Heart left ventricle (tissue), 16 donors: ENCODE measurements at regions of chr1 and their contacts with region 1.

Region 1: DNA sequence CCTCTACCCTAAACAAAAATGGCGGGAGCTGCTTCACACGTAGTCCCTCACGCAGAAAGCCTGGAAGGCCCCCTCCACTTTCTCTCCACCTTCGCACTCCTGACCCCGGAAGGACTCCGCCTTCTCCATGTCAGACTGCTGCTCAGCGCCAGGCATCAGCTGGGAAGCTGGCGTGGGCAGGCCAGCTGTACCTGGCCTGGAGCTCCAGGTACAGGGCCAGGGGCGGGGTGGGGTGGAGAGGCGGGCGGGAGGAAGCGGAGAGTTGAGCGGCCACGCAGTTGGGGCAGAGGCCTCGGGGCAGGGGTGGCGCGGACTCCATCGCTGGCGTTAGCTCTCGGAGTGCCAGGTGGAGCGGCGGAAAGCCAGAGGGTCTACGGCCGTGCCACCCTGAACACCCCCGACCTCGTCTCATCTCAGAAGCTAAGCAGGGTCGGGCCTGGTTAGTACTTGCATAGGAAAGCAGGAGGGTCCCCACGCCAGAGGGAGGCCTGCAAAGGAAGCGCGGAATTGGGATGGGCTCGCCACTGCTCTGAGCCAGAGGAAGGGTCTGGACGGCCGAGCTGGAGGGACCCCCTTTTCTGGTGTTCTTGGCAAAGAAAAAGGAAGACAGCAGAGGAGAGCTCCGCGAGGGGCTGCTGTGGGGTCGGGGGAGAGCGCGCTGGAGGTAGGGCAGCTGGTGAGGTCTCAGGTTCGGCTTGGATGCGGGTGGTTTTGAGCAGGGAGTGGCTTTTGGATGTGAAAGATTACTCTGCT is at the start of gene MIGA1:
- DNase-seq: peak; percentile 89 to 94 (median 92)
- ATAC-seq: peak; percentile 97 to 99 (median 99)
- H3K4me3 ChIP-seq: peak within 1 kb of the TSS; percentile 74 to 97 (median 85)
- H3K27ac ChIP-seq: peak within 1 kb of the TSS in 10 of 12 donors; percentile 47 to 79 (median 67)
- H3K4me1 ChIP-seq: peaks cover 0 to 21% (median 12%) of the 10 kb centered on the region in 12 donors
- H3K27me3 ChIP-seq: no peaks in the 10 kb centered on the region
- CTCF ChIP-seq: no peak
- POLR2A ChIP-seq: no peak
- total RNA-seq, gene MIGA1: 8.1 to 14.1 (median 10.3) TPM

Region 2: DNA sequence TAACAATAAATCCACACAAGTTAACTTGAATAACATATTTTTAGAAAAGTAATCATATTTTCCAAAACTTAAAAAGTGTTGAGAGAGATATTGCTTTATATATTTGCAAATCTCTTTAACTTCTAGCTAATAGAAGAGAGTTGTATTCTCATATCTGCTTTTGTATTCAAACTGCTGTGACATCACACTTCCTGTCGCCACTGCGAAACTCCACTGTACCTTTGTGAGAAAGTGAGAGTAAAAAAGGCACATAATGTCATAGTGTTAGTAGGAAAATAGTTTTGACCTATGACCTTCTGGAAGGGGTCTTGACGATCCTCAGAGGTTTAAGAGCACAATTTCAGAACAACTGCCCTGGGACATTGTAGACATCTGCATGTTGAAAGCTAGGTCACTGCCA is 476.3 kb before region 1 on chr1:
- intact Hi-C with region 1: no loop called
- DNase-seq: no peak
- ATAC-seq: no peak
- H3K4me3 ChIP-seq: no peak overlapping the region
- H3K27ac ChIP-seq: no peak overlapping the region
- H3K4me1 ChIP-seq: no peaks in the 10 kb centered on the region
- H3K27me3 ChIP-seq: peaks cover 0 to 4% (median 0%) of the 10 kb centered on the region in 9 donors
- CTCF ChIP-seq: no peak
- POLR2A ChIP-seq: no peak

Region 3: GRCh38 chr1:77759071-77760028 is 20.4 kb before region 1 on chr1 and contains the start of gene USP33:
- intact Hi-C with region 1: loop called in 2 of 10 experiments (anchors 1 to 2 kb)
- DNase-seq: peak; percentile 90 to 95 (median 91)
- ATAC-seq: peak; percentile 91 to 99 (median 98)
- H3K4me3 ChIP-seq: peak within 1 kb of the TSS; percentile 80 to 100 (median 94)
- H3K27ac ChIP-seq: peak within 1 kb of the TSS; percentile 70 to 95 (median 92)
- H3K4me1 ChIP-seq: peaks cover 3 to 46% (median 26%) of the 10 kb centered on the region in 12 donors
- H3K27me3 ChIP-seq: no peaks in the 10 kb centered on the region
- CTCF ChIP-seq: peak in 2 of 12 donors; percentile 21 to 25
- POLR2A ChIP-seq: peak; percentile 30 to 81
- total RNA-seq, gene USP33: 24.2 to 40.5 (median 29.0) TPM

Region 4: DNA sequence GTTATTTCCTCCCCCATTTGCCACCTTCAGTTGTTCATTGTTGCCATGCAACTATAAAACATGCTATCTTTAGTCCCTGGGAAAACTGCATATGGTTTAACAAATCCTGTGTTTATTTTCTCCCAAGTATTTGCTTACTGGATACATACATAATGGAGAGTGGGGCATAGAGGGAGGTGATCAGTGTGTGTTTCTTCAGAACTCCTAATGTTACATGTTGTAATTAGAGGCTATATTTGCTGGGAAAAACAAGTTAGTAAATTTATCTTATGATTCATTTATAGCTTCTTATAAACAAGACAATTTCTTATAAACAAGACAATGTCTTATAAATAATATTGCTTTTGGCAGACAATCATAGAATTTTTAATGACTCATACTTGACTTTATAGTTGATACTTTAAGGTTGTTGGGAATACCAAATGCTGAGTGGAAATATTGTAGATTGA is 258.8 kb after region 1 on chr1:
- intact Hi-C with region 1: no loop called
- DNase-seq: no peak
- ATAC-seq: no peak
- H3K4me3 ChIP-seq: no peak overlapping the region
- H3K27ac ChIP-seq: no peak overlapping the region
- H3K4me1 ChIP-seq: peaks cover 0 to 16% (median 0%) of the 10 kb centered on the region in 12 donors
- H3K27me3 ChIP-seq: no peaks in the 10 kb centered on the region
- CTCF ChIP-seq: no peak
- POLR2A ChIP-seq: no peak

Region 5: DNA sequence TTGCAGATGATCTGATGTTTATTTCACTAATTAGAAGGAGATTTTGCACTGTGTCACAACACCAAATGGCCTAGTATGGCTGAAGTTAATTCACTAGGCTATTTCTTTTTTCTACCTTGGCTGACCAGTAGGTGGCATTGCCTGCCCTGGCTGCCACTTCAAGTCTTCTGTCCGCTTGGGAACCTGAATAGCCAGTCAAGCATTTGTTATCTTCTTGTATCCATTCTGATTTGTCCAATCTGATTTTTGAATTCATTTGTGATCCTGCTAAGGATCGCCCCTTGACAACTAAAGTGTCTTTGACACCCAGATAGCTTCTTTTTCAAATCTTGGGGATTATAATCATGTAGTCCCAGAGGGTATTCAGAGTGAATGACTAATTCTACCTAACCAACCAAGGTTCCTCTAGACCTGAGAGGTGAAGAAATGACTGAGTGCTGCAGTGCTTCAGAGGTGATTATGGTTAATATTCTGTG is 365.4 kb after region 1 on chr1:
- intact Hi-C with region 1: no loop called
- DNase-seq: peak in 3 of 5 donors; percentile 34 to 38 (median 34)
- ATAC-seq: peak in 3 of 4 donors; percentile 56 to 76 (median 74)
- H3K4me3 ChIP-seq: no peak overlapping the region
- H3K27ac ChIP-seq: no peak overlapping the region
- H3K4me1 ChIP-seq: peaks cover 0 to 9% (median 0%) of the 10 kb centered on the region in 12 donors
- H3K27me3 ChIP-seq: no peaks in the 10 kb centered on the region
- CTCF ChIP-seq: peak; percentile 52 to 92 (median 80)
- POLR2A ChIP-seq: no peak